ENCODE measurements at regions of chrX and their contacts with region 1.

Region 1: GRCh38 chrX:111680988-111681779 is at the start of gene ALG13:
- DNase-seq: peak; percentile 76
- H3K4me3 Mint-ChIP-seq: peak within 1 kb of the TSS; percentile 86
- H3K27ac Mint-ChIP-seq: peak within 1 kb of the TSS; percentile 95
- H3K4me1 Mint-ChIP-seq: peaks cover 17% of the 10 kb centered on the region
- H3K27me3 Mint-ChIP-seq: no peaks in the 10 kb centered on the region
- total RNA-seq, gene ALG13: 52.2 and 55.2 TPM in 2 replicates

Region 2: GRCh38 chrX:110477593-110478228 is 1203.5 kb before region 1 on chrX:
- intact Hi-C with region 1: no loop called
- DNase-seq: no peak
- H3K4me3 Mint-ChIP-seq: no peak overlapping the region
- H3K27ac Mint-ChIP-seq: no peak overlapping the region
- H3K4me1 Mint-ChIP-seq: no peaks in the 10 kb centered on the region
- H3K27me3 Mint-ChIP-seq: no peaks in the 10 kb centered on the region

Region 3: GRCh38 chrX:111581086-111581485 is 100.1 kb before region 1 on chrX:
- intact Hi-C with region 1: no loop called
- DNase-seq: no peak
- H3K4me3 Mint-ChIP-seq: no peak overlapping the region
- H3K27ac Mint-ChIP-seq: no peak overlapping the region
- H3K4me1 Mint-ChIP-seq: no peaks in the 10 kb centered on the region
- H3K27me3 Mint-ChIP-seq: no peaks in the 10 kb centered on the region

Region 4: GRCh38 chrX:111609206-111609605 is 72.0 kb before region 1 on chrX:
- intact Hi-C with region 1: no loop called
- DNase-seq: no peak
- H3K4me3 Mint-ChIP-seq: no peak overlapping the region
- H3K27ac Mint-ChIP-seq: no peak overlapping the region
- H3K4me1 Mint-ChIP-seq: no peaks in the 10 kb centered on the region
- H3K27me3 Mint-ChIP-seq: no peaks in the 10 kb centered on the region

Region 5: GRCh38 chrX:111645607-111646006 is 35.6 kb before region 1 on chrX:
- intact Hi-C with region 1: loop called (anchors 1 kb)
- DNase-seq: no peak
- H3K4me3 Mint-ChIP-seq: no peak overlapping the region
- H3K27ac Mint-ChIP-seq: peak overlapping the region; percentile 60
- H3K4me1 Mint-ChIP-seq: peaks cover 13% of the 10 kb centered on the region
- H3K27me3 Mint-ChIP-seq: peaks cover 5% of the 10 kb centered on the region